ENCODE measurements at regions of chr5 and their contacts with region 1.

Region 1: GRCh38 chr5:37111426-37112382 is 137.5 kb downstream of the CPLANE1 start:
- DNase-seq: no peak
- ATAC-seq: no peak
- H3K4me3 ChIP-seq: no peak overlapping the region
- H3K27ac ChIP-seq: no peak overlapping the region
- H3K4me1 ChIP-seq: peaks cover 13% of the 10 kb centered on the region
- H3K27me3 ChIP-seq: no peaks in the 10 kb centered on the region
- CTCF ChIP-seq: no peak
- EP300 ChIP-seq: no peak
- POLR2A ChIP-seq: no peak
- RAD21 ChIP-seq: no peak

Region 2: GRCh38 chr5:36717131-36717695 is 394.5 kb before region 1 on chr5:
- CTCF ChIA-PET with region 1: no interaction called
- POLR2A ChIA-PET with region 1: no interaction called
- in situ Hi-C with region 1: no loop called
- intact Hi-C with region 1: loop called (anchors 5 kb)
- DNase-seq: no peak
- ATAC-seq: no peak
- H3K4me3 ChIP-seq: no peak overlapping the region
- H3K27ac ChIP-seq: no peak overlapping the region
- H3K4me1 ChIP-seq: no peaks in the 10 kb centered on the region
- H3K27me3 ChIP-seq: no peaks in the 10 kb centered on the region
- CTCF ChIP-seq: no peak
- EP300 ChIP-seq: no peak
- POLR2A ChIP-seq: no peak
- RAD21 ChIP-seq: no peak

Region 3: GRCh38 chr5:37165761-37166160 is 54.1 kb after region 1 on chr5:
- CTCF ChIA-PET with region 1: no interaction called
- POLR2A ChIA-PET with region 1: no interaction called
- in situ Hi-C with region 1: no loop called
- intact Hi-C with region 1: no loop called
- DNase-seq: no peak
- ATAC-seq: no peak; the same call in 2 of the 3 replicates
- H3K4me3 ChIP-seq: no peak overlapping the region
- H3K27ac ChIP-seq: no peak overlapping the region
- H3K4me1 ChIP-seq: peaks cover 9% of the 10 kb centered on the region
- H3K27me3 ChIP-seq: no peaks in the 10 kb centered on the region
- CTCF ChIP-seq: no peak
- EP300 ChIP-seq: no peak
- POLR2A ChIP-seq: no peak
- RAD21 ChIP-seq: no peak

Measured in HepG2 (cell line).